MCF 10A (cell line): ENCODE measurements at regions of chr17 and their contacts with region 1.

Region 1: GRCh38 chr17:40015005-40015997 is at the start of gene CSF3:
- DNase-seq: peak; percentile 92
- H3K4me3 Mint-ChIP-seq: peak within 1 kb of the TSS; percentile 65
- H3K27ac Mint-ChIP-seq: peak within 1 kb of the TSS; percentile 39
- H3K4me1 Mint-ChIP-seq: peaks cover 35% of the 10 kb centered on the region
- H3K27me3 Mint-ChIP-seq: no peaks in the 10 kb centered on the region
- CTCF ChIP-seq: no peak
- total RNA-seq, gene CSF3: 9.6 and 17.1 TPM in 2 replicates

Region 2: GRCh38 chr17:39623274-39623950 is 391.9 kb before region 1 on chr17:
- CTCF ChIA-PET with region 1: no interaction called
- POLR2A ChIA-PET with region 1: no interaction called
- intact Hi-C with region 1: no loop called
- DNase-seq: peak; percentile 77
- H3K4me3 Mint-ChIP-seq: no peak overlapping the region
- H3K27ac Mint-ChIP-seq: no peak overlapping the region
- H3K4me1 Mint-ChIP-seq: peaks cover 9% of the 10 kb centered on the region
- H3K27me3 Mint-ChIP-seq: peaks cover 15% of the 10 kb centered on the region
- CTCF ChIP-seq: peak; percentile 90

Region 3: DNA sequence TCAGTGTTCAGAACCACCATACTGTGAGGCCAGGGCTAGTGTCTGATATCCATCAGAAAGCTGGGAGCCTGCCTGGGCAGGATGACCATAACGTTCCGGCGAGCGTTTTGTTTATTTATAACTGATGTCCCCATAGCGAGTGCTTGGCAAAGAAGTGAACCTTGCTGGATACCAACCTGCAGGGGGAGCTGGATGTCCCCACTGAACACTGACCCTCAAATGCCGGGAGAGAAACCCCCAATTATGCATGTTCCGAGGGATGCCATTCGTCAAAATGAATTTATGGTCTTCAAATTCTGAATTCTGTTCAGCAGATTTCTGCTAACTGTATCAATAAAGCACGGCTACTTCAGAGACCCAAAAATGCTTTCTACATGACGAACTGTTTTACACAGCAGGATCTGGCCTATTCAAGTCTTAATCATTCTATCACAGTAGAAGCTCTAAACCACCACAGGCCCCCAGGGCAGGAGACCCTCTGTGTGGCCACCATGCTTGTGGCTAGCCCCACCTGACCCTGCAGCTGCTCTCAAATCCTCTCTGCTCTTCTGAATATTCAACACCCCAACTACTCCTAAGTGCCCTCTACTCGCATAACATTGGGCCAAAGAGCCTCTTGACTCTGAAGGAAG is 23.7 kb after region 1 on chr17:
- CTCF ChIA-PET with region 1: interaction called, 13 read pairs
- POLR2A ChIA-PET with region 1: interaction called, 5 read pairs
- intact Hi-C with region 1: no loop called
- DNase-seq: peak; percentile 63
- H3K4me3 Mint-ChIP-seq: no peak overlapping the region
- H3K27ac Mint-ChIP-seq: no peak overlapping the region
- H3K4me1 Mint-ChIP-seq: peaks cover under 1% of the 10 kb centered on the region
- H3K27me3 Mint-ChIP-seq: no peaks in the 10 kb centered on the region
- CTCF ChIP-seq: peak; percentile 35

Region 4: DNA sequence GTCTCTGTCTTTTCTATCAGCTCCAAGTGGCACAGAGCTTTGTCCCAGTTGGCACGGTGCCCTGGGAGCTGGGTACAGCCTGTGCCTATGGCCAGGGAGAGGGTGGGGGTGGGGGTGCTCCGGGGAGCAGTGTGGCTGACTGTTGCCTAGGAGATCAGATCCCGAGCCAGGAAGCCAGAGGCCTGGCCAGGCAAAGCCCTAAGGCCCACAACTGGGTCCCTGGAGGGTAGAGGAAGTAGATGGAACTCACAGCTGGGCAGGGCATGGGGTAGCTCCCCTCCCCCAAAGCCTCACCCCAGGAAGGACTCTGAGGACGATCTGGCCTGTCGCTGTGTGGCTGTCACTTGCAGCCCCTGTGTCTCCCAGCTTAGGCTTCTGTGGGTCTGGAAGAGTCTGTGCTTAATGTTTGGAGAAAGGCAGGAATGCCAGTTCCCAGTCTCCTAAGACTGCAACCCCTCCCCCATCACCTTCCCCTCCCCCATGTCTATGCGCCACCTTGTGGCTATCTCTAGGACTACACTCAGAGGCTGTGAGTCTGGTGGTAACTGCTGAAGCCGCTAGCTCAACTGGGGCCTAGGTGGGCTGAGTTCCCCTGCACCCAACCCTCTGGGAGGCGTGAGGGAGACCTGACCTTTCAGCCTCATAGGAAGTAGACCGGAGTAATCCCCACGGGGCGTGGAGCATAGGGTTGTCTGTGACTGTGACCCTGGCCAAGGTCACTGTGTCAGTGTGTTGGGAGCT is 60.1 kb after region 1 on chr17:
- CTCF ChIA-PET with region 1: interaction called, 41 read pairs
- POLR2A ChIA-PET with region 1: interaction called, 5 read pairs
- intact Hi-C with region 1: loop called (anchors 1 kb)
- DNase-seq: peak; percentile 78
- H3K4me3 Mint-ChIP-seq: peak overlapping the region; percentile 65
- H3K27ac Mint-ChIP-seq: peak overlapping the region; percentile 36
- H3K4me1 Mint-ChIP-seq: peaks cover 62% of the 10 kb centered on the region
- H3K27me3 Mint-ChIP-seq: no peaks in the 10 kb centered on the region
- CTCF ChIP-seq: peak; percentile 89

Region 5: GRCh38 chr17:40086150-40087044 is 71.1 kb after region 1 on chr17:
- CTCF ChIA-PET with region 1: interaction called, 30 read pairs
- POLR2A ChIA-PET with region 1: interaction called, 3 read pairs
- intact Hi-C with region 1: loop called (anchors 1 kb)
- DNase-seq: peak; percentile 61
- H3K4me3 Mint-ChIP-seq: no peak overlapping the region
- H3K27ac Mint-ChIP-seq: no peak overlapping the region
- H3K4me1 Mint-ChIP-seq: no peaks in the 10 kb centered on the region
- H3K27me3 Mint-ChIP-seq: no peaks in the 10 kb centered on the region
- CTCF ChIP-seq: peak; percentile 81